Naive thymus-derived CD4-positive, alpha-beta T cell (primary cell): ENCODE measurements at regions of chr5 and their contacts with region 1.

Region 1: DNA sequence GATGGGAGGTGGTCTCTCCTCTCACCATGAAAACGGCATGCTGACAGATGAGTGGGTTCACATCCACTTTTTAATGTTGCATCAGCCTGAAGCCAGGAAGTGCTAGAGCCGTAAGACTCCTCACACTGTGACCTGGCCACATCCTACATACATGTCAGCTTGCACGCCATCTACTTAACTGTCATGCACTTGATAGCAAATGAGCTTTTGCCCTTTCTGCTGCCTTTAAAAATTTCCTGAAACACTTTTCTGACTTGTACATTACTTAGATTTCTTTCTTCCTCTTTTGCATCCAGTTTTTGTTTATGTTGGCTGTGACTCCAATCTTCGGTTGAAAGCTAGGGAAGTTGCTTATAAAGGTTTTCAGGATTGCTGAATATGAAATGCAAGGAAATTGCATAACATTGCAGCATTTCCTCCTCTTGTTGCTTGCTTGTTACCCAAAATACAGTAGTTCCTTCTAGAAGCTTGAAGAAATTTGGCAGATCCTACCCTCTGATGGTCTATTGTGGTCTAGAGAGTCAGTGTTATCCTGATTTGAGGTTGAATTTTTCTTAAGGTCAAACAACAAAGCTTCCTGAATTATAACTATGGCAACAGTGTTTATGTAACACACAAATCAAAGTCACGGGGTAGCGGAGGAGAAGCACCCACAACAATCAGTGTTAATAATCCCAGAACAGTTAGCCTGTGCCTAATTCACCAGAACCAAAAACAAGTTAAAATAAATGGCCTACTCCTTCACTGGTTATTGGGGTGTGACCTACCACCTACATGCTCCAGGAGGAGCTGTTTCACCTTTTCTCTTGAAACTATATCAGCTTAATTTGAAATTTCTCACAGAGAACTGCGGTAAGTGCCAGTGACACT is 232.5 kb downstream of the ARHGAP26 start:
- DNase-seq: peak in 8 of 9 donors; percentile 40 to 66 (median 50)
- ATAC-seq: peak; percentile 86
- H3K4me3 ChIP-seq: peak overlapping the region; percentile 3
- H3K4me3 Mint-ChIP-seq: peak overlapping the region; percentile 22 to 80 (median 62)
- H3K27ac ChIP-seq: peak overlapping the region; percentile 68
- H3K27ac Mint-ChIP-seq: peak overlapping the region; percentile 78 to 98 (median 90)
- H3K4me1 ChIP-seq: peaks cover 31 to 66% of the 10 kb centered on the region in 2 donors
- H3K4me1 Mint-ChIP-seq: peaks cover 37 to 90% (median 50%) of the 10 kb centered on the region in 7 donors
- H3K27me3 ChIP-seq: no peaks in the 10 kb centered on the region
- H3K27me3 Mint-ChIP-seq: no peaks in the 10 kb centered on the region

Region 2: DNA sequence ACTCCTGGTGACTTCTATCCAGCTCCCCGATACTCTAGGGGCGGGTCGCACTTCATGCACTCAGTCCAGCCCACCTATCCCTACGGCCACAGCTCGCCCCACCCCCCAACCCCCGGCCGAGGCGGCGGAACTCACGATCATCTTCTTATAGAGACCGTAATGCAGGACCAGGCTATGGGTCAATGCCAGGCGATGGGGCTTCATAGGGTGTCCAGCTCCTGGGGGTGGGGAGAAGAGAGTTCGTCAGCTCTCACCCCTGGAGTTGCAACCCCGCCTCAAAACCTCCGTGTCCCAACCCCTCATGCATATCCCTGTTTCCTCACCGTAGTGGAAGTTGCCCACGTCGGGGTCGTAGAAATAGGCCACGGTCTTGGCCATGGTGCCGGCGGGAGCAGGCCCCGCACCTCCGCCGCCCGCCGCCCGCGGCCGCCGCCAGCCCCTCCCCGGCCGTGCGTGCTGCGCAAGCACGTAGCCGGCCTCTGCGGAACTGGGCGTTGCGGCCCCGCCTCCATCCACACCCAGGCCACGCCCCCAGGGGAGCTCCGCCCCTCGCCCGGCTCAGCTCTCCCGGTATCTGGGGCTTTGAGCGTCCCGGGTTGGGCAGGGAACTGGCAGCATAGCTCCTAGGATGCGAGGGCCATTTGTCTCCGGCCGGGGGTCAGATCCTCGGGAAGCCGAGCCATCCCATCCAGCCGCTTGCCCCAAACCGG is 1366.1 kb before region 1 on chr5 and contains the starts of genes HDAC3 and RELL2:
- CTCF ChIA-PET with region 1: no interaction called
- POLR2A ChIA-PET with region 1: no interaction called
- intact Hi-C with region 1: loop called in 1 of 2 experiments (anchors 10 kb)
- DNase-seq: peak; percentile 86 to 99 (median 94)
- ATAC-seq: peak; percentile 98
- H3K4me3 ChIP-seq: peak within 1 kb of the TSS; percentile 81
- H3K4me3 Mint-ChIP-seq: peak within 1 kb of the TSS; percentile 89 to 98 (median 92)
- H3K27ac ChIP-seq: peak within 1 kb of the TSS; percentile 88
- H3K27ac Mint-ChIP-seq: peak within 1 kb of the TSS; percentile 72 to 95 (median 92)
- H3K4me1 ChIP-seq: peaks cover 23 to 24% of the 10 kb centered on the region in 2 donors
- H3K4me1 Mint-ChIP-seq: peaks cover 35 to 56% (median 46%) of the 10 kb centered on the region in 7 donors
- H3K27me3 ChIP-seq: no peaks in the 10 kb centered on the region
- H3K27me3 Mint-ChIP-seq: no peaks in the 10 kb centered on the region
- total RNA-seq, gene HDAC3: 70.0 to 92.8 (median 79.0) TPM
- total RNA-seq, gene RELL2: 14.3 to 21.7 (median 17.5) TPM

Region 3: DNA sequence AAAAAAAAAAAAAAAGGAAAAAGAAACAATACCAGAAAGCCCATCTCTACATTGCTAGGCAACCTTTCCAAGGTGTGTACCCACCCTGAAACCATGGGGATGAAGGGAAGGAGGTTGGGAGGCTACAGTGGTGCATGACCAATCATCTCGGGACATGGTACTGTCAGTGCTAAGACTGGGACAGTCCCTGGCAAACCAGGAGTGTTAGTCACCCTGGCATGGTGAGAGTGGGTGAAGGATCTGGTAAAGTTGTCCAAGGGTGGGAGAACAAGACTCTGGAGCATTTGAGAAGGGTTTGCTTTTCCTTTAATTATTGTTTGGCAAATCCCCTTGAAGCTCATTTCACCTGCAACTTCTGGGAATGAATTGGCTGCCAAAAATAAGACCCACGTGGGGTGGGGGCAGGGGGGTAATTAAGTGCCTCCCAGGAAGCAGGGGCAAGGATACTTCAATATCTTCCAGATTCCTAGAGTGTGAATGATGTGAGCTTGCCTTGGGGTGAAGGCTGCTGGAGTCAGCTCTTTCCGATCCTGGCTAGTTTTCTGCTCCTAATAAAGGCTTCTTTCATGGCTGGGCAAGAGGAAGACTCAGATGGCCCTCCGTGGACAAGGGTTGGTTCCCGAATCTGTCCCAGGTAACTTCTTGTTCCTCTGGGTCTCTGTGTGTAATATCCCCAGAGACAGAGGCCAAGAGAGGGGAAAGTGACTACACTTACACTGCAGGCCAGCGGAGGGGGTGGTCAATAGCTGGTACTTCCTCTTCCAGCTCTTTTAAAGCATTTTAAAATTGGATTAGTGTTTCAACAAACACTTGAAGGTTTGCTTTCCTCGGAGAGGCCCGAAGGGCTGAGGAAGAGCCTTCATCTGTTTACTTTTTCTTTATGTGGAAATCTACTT is 616.3 kb before region 1 on chr5:
- CTCF ChIA-PET with region 1: no interaction called
- POLR2A ChIA-PET with region 1: no interaction called
- intact Hi-C with region 1: no loop called
- DNase-seq: no peak
- ATAC-seq: peak; percentile 37
- H3K4me3 ChIP-seq: no peak overlapping the region
- H3K4me3 Mint-ChIP-seq: no peak overlapping the region
- H3K27ac ChIP-seq: no peak overlapping the region
- H3K27ac Mint-ChIP-seq: peak overlapping the region in 2 of 9 donors; percentile 53 to 72
- H3K4me1 ChIP-seq: peaks cover 0 to 3% of the 10 kb centered on the region in 2 donors
- H3K4me1 Mint-ChIP-seq: peaks cover 11 to 35% (median 27%) of the 10 kb centered on the region in 7 donors
- H3K27me3 ChIP-seq: no peaks in the 10 kb centered on the region
- H3K27me3 Mint-ChIP-seq: peaks cover 0 to 13% (median under 1%) of the 10 kb centered on the region in 5 donors

Region 4: GRCh38 chr5:142922223-142922952 is 80.3 kb before region 1 on chr5:
- CTCF ChIA-PET with region 1: interaction called, 5 read pairs
- POLR2A ChIA-PET with region 1: interaction called, 3 read pairs
- intact Hi-C with region 1: loop called (anchors 2 kb)
- DNase-seq: peak in 1 of 9 donors; percentile 3
- ATAC-seq: peak; percentile 50
- H3K4me3 ChIP-seq: no peak overlapping the region
- H3K4me3 Mint-ChIP-seq: no peak overlapping the region
- H3K27ac ChIP-seq: no peak overlapping the region
- H3K27ac Mint-ChIP-seq: peak overlapping the region in 2 of 9 donors; percentile 9 to 19
- H3K4me1 ChIP-seq: peaks cover 0 to 19% of the 10 kb centered on the region in 2 donors
- H3K4me1 Mint-ChIP-seq: peaks cover 7 to 40% (median 11%) of the 10 kb centered on the region in 7 donors
- H3K27me3 ChIP-seq: no peaks in the 10 kb centered on the region
- H3K27me3 Mint-ChIP-seq: no peaks in the 10 kb centered on the region

Region 5: GRCh38 chr5:142934051-142934762 is 68.5 kb before region 1 on chr5:
- CTCF ChIA-PET with region 1: no interaction called
- POLR2A ChIA-PET with region 1: no interaction called
- intact Hi-C with region 1: no loop called
- DNase-seq: no peak
- ATAC-seq: no peak
- H3K4me3 ChIP-seq: no peak overlapping the region
- H3K4me3 Mint-ChIP-seq: no peak overlapping the region
- H3K27ac ChIP-seq: no peak overlapping the region
- H3K27ac Mint-ChIP-seq: peak overlapping the region in 1 of 9 donors; percentile 57
- H3K4me1 ChIP-seq: peaks cover 0 to 17% of the 10 kb centered on the region in 2 donors
- H3K4me1 Mint-ChIP-seq: peaks cover 0 to 58% (median 20%) of the 10 kb centered on the region in 7 donors
- H3K27me3 ChIP-seq: no peaks in the 10 kb centered on the region
- H3K27me3 Mint-ChIP-seq: no peaks in the 10 kb centered on the region

Region 6: GRCh38 chr5:143153332-143154119 is 150.8 kb after region 1 on chr5:
- CTCF ChIA-PET with region 1: no interaction called
- POLR2A ChIA-PET with region 1: no interaction called
- intact Hi-C with region 1: no loop called
- DNase-seq: no peak
- ATAC-seq: no peak
- H3K4me3 ChIP-seq: no peak overlapping the region
- H3K4me3 Mint-ChIP-seq: no peak overlapping the region
- H3K27ac ChIP-seq: no peak overlapping the region
- H3K27ac Mint-ChIP-seq: no peak overlapping the region
- H3K4me1 ChIP-seq: no peaks in the 10 kb centered on the region
- H3K4me1 Mint-ChIP-seq: peaks cover 0 to 5% (median 0%) of the 10 kb centered on the region in 7 donors
- H3K27me3 ChIP-seq: no peaks in the 10 kb centered on the region
- H3K27me3 Mint-ChIP-seq: no peaks in the 10 kb centered on the region

Region 7: DNA sequence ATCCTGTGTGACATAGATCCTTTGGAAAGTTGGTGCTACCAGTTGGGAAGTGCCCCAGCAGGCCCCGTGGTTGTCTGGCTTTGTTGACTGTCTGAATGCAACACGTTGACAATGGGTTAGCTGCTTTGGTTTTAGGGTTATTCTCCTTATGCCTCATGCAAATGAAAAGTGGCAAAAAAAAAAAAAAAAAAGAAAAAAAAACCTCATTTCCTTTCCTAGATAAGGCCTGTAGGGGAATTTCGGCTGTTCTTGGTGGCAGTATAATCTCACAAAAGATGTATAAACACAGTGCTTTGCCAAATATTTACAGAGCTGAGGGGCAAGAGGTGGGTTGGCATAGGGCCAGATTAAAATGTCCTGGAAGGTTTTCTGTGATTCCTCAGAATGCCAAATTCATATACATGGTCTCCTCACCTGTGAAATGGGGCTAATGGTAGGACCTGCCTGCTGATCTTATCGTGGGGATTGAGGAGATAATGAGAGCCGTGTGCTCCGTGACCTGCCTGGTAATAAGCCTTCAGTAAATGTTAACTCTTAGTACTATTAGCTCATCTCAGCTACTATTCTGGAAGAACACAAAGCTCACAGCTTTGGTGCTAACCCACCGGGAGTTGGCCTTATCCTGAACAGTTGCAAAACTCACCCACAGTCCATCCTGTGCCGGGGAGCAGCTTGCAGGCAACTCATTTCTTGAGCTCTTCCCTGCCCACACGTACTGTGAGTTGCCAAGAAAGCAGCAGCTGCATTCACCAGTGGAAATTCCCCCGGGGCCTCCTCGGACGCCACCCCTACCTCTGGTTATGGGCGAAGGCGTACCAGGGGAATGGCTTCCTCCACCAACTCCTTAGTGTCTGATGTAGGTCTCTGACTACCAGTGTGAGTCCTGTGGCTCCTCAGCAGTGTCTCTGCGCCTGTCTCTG is 180.5 kb after region 1 on chr5:
- CTCF ChIA-PET with region 1: no interaction called
- POLR2A ChIA-PET with region 1: no interaction called
- intact Hi-C with region 1: loop called in 1 of 2 experiments (anchors 2 kb)
- DNase-seq: peak in 1 of 9 donors; percentile 80
- ATAC-seq: peak; percentile 61
- H3K4me3 ChIP-seq: no peak overlapping the region
- H3K4me3 Mint-ChIP-seq: peak overlapping the region in 1 of 10 donors; percentile 66
- H3K27ac ChIP-seq: no peak overlapping the region
- H3K27ac Mint-ChIP-seq: peak overlapping the region in 1 of 9 donors; percentile 89
- H3K4me1 ChIP-seq: peaks cover 3 to 22% of the 10 kb centered on the region in 2 donors
- H3K4me1 Mint-ChIP-seq: peaks cover 6 to 65% (median 16%) of the 10 kb centered on the region in 7 donors
- H3K27me3 ChIP-seq: no peaks in the 10 kb centered on the region
- H3K27me3 Mint-ChIP-seq: no peaks in the 10 kb centered on the region

Region 8: DNA sequence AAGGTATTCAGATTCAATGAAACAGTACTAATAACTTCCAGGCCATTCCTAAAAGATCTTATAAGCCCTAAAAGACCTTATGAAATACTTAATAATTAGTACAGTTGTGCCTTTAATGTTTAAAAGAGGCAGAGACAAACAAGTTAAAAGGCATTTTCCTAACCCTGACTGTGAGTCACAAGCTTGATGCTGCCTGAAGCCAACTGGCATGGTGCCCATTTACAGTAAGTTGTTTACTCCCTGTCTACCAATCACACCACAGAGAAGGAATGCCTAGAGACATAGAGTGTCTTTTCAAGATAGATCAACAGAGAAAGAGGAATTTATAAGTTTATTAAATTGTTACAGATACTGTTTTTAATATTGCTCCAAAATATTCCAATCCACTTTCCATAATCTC is 353.0 kb after region 1 on chr5:
- CTCF ChIA-PET with region 1: interaction called, 4 read pairs
- POLR2A ChIA-PET with region 1: no interaction called
- intact Hi-C with region 1: loop called (anchors 2 to 5 kb)
- DNase-seq: peak in 7 of 9 donors; percentile 43 to 82 (median 63)
- ATAC-seq: peak; percentile 85
- H3K4me3 ChIP-seq: no peak overlapping the region
- H3K4me3 Mint-ChIP-seq: peak overlapping the region in 8 of 10 donors; percentile 9 to 51 (median 39)
- H3K27ac ChIP-seq: no peak overlapping the region
- H3K27ac Mint-ChIP-seq: peak overlapping the region in 8 of 9 donors; percentile 33 to 92 (median 79)
- H3K4me1 ChIP-seq: peaks cover 53 to 60% of the 10 kb centered on the region in 2 donors
- H3K4me1 Mint-ChIP-seq: peaks cover 7 to 84% (median 56%) of the 10 kb centered on the region in 7 donors
- H3K27me3 ChIP-seq: no peaks in the 10 kb centered on the region
- H3K27me3 Mint-ChIP-seq: no peaks in the 10 kb centered on the region

Region 9: GRCh38 chr5:144170276-144171024 is 1167.8 kb after region 1 on chr5 and contains the starts of genes KCTD16 and YIPF5:
- CTCF ChIA-PET with region 1: no interaction called
- POLR2A ChIA-PET with region 1: interaction called, 10 read pairs
- intact Hi-C with region 1: loop called (anchors 1 to 2 kb)
- DNase-seq: peak; percentile 90 to 98 (median 98)
- ATAC-seq: peak; percentile 98
- H3K4me3 ChIP-seq: peak within 1 kb of the TSS; percentile 79
- H3K4me3 Mint-ChIP-seq: peak within 1 kb of the TSS; percentile 90 to 99 (median 94)
- H3K27ac ChIP-seq: peak within 1 kb of the TSS; percentile 91
- H3K27ac Mint-ChIP-seq: peak within 1 kb of the TSS; percentile 85 to 96 (median 95)
- H3K4me1 ChIP-seq: peaks cover 15 to 19% of the 10 kb centered on the region in 2 donors
- H3K4me1 Mint-ChIP-seq: peaks cover 19 to 56% (median 52%) of the 10 kb centered on the region in 7 donors
- H3K27me3 ChIP-seq: no peaks in the 10 kb centered on the region
- H3K27me3 Mint-ChIP-seq: peaks cover 0 to 29% (median 0%) of the 10 kb centered on the region in 5 donors
- total RNA-seq, gene KCTD16: 0.07 to 0.22 TPM in 2 of 5 experiments, not detected in the others
- total RNA-seq, gene YIPF5: 27.0 to 49.2 (median 38.6) TPM